BJ (cell line): ENCODE measurements at regions of chr6 and their contacts with region 1.

Region 1: GRCh38 chr6:35202066-35202546 is 11.7 kb upstream of the SCUBE3 start:
- DNase-seq: no peak
- H3K4me3 ChIP-seq: no peak overlapping the region
- H3K27me3 ChIP-seq: no peaks in the 10 kb centered on the region
- CTCF ChIP-seq: no peak

Region 2: GRCh38 chr6:34774967-34775366 is 427.1 kb before region 1 on chr6:
- CTCF ChIA-PET with region 1: no interaction called
- POLR2A ChIA-PET with region 1: no interaction called
- DNase-seq: no peak
- H3K4me3 ChIP-seq: no peak overlapping the region
- H3K27me3 ChIP-seq: no peaks in the 10 kb centered on the region
- CTCF ChIP-seq: no peak

Region 3: DNA sequence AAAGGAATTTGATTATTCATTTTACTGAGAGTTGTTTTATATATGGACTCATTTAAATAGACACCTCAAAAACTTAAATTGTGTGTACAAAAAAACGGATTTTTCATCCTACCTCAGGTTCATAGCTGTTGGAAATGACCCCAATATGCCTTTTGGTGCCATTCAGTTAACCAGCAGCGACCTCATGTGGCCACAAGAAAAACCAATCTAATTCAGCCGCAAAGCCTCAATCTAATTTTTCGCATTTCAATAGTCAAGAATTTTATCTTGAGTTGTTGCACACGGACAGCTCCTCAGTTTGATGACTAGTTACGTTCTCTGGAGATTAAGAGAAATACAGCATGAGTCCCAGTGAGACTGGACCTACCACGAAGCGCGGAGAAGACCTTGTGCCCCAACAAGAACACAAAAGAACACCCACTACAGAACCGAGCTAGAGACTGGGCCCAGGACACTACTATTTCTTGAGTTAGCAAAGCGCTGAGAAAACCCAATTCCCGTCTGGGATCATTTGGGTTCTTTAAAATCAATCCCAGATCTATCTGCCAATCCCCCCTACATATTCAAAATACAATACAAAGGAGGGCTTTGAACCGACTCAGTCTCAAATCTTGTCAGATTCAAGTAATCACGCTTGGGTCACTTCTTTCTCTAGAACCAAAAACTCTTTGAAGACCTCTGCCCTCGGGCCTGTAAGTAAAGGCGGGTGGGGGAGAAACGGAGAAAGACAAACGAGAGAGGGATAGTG is 62.0 kb before region 1 on chr6:
- CTCF ChIA-PET with region 1: interaction called, 220 read pairs
- POLR2A ChIA-PET with region 1: no interaction called
- DNase-seq: no peak
- H3K4me3 ChIP-seq: no peak overlapping the region
- H3K27me3 ChIP-seq: no peaks in the 10 kb centered on the region
- CTCF ChIP-seq: peak; percentile 74

Region 4: DNA sequence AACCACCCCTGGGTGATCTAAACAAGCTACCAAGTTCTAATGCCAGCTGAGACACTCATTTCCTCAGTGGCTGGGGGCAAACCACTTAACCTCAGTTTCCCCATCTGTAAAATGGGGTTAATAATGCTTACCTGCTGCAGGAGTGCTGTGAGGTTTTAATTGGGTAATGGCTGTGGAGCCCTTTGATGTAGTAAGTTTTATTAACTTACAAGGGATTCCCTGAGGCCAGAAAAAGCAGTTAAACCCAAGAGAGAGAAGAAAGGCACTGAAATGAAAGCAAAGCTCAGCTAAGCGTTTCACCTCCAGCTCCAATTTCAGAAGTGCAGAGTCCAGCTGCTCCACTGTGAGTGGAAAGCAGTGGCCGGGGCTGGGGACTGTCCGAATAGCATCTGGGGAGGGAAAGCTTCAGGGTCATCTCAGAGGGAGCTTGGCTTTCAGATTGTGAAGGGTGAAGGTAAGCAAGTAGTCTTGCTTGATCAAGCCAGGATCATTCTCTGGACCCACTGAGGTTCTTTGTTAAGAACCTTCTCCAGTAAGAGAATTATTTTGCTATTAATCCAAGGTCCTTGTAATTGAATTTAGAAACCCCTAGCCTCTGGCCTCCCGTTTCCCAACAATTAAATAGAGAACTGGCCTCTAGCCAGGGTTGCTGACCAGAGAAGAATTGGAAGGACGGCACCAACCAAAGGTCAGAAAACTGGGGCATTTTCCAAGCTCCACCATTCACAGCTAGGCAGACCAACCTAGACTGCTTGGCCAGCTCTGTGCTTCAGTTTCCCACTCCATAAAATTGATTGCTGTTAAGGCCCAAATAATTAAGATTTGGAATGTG is 40.1 kb before region 1 on chr6:
- CTCF ChIA-PET with region 1: interaction called, 10 read pairs
- POLR2A ChIA-PET with region 1: no interaction called
- DNase-seq: no peak
- H3K4me3 ChIP-seq: no peak overlapping the region
- H3K27me3 ChIP-seq: no peaks in the 10 kb centered on the region
- CTCF ChIP-seq: no peak

Region 5: DNA sequence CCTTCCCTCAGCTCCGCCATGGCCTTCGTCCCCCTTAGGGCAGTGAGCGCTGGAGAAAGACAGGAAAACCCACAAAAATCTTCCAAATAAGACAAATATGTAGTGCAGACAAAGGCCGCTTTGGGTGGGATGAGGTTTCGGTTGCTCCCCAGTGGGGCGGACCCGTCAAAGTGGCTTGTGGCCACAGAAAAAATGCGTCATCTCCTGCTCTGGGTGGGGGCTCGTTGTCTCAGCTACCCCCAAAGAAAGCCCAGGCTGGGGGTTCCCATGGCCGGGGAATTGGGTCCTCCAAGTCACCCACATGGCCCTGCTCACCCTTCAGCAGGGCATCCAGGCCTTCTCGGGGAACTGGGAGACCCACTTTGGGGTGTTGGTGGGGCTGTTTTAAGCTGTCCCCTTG is 10.2 kb before region 1 on chr6:
- CTCF ChIA-PET with region 1: interaction called, 19 read pairs
- POLR2A ChIA-PET with region 1: no interaction called
- DNase-seq: no peak
- H3K4me3 ChIP-seq: no peak overlapping the region
- H3K27me3 ChIP-seq: no peaks in the 10 kb centered on the region
- CTCF ChIP-seq: no peak